CD4-positive, alpha-beta memory T cell (primary cell): ENCODE measurements at regions of chr14 and their contacts with region 1.

Region 1: GRCh38 chr14:95527387-95528002 is 7.4 kb upstream of the GLRX5 start:
- DNase-seq: peak; percentile 43 to 57 (median 52)
- H3K4me3 ChIP-seq: no peak overlapping the region
- H3K4me3 Mint-ChIP-seq: peak overlapping the region in 1 of 8 donors; percentile 52
- H3K27ac ChIP-seq: no peak overlapping the region
- H3K27ac Mint-ChIP-seq: peak overlapping the region; percentile 38 to 90 (median 66)
- H3K4me1 ChIP-seq: peaks cover 65% of the 10 kb centered on the region
- H3K4me1 Mint-ChIP-seq: peaks cover 51 to 80% (median 66%) of the 10 kb centered on the region in 4 donors
- H3K27me3 ChIP-seq: no peaks in the 10 kb centered on the region
- H3K27me3 Mint-ChIP-seq: no peaks in the 10 kb centered on the region

Region 2: DNA sequence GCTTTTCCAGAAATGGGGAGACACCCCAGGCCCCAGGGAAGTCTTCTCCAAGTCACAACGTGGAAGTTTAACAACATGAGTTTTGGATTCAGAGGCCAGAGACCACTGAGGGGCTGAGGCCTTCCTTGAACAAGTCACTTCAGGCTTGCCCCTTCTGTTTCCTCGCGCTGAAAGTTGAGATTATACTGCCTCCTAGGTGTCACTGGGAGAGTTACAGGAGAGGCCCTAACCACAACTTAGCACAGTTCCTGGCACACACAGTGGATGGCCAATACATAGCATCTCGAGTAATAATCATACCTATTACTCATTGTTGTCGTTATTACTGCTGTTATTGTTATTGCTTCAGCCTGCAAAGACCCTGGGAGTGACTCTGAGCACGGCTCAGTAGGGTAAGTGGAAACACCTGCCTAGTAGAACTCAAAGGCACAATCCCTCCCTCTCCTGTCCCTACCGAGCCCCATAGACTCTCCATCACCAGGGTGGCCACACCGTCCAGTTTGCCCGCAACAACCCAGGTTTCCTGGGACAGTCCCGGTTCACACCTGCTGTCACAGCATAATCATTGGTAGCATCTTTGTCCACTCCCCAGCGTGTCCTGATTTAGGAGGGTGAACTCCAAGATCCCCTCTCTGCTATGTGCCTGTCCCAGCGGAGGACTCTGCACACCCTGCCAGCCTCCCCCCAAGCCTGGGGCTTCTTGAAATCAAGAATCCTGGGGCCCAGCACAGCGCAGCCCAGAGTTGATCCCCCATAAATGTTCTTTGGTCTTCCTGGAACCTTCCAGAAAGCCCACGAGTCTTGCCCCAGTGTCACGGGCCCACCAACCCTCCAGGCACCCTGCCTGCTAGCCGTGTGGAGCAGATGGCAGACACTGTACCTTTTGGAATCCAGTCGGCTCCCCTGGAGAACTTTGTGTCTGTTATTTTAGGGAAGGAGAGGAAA is 96.0 kb before region 1 on chr14:
- CTCF ChIA-PET with region 1: interaction called, 47 read pairs
- POLR2A ChIA-PET with region 1: interaction called, 5 read pairs
- intact Hi-C with region 1: loop called (anchors 1 kb)
- DNase-seq: no peak
- H3K4me3 ChIP-seq: no peak overlapping the region
- H3K4me3 Mint-ChIP-seq: no peak overlapping the region
- H3K27ac ChIP-seq: no peak overlapping the region
- H3K27ac Mint-ChIP-seq: peak overlapping the region in 1 of 7 donors; percentile 70
- H3K4me1 ChIP-seq: no peaks in the 10 kb centered on the region
- H3K4me1 Mint-ChIP-seq: peaks cover 0 to 2% (median under 1%) of the 10 kb centered on the region in 4 donors
- H3K27me3 ChIP-seq: no peaks in the 10 kb centered on the region
- H3K27me3 Mint-ChIP-seq: no peaks in the 10 kb centered on the region

Region 3: DNA sequence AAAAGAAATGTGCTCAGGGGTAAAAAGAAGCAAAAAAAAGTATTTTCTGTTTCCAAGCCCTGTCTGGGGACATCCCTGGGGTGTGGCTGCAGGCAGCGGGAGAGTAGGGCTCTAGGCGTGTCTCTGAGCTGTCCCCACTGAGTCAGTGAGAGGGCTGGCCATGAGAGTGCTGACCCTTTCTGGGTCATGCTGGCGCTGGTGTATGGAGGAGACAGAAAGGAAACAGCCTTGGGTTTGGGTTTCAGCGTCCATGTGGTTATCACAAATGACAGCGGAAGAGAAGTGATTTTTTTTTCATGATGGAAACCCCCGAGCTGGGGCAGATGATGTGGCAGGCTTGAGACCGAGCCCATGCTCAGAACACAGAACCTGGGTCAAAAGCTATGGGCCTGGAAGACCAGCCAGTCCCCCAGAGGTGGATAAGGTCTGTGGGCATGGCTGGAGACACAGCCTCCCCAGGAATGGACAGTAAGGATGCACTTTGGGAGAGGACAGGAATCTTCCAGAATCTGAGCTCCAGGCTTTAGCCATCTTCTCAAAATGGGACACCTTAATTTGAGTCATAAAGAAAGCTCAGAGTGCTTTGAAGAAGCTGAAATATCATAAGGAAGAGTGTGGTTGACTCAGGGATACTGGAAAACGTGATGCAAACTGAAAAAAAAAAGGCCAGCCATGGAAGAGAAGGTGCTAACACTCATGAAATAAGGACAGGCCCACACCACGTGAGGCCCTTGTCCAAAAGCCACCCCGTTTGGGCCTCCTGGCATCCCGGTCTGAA is 47.2 kb before region 1 on chr14:
- CTCF ChIA-PET with region 1: interaction called, 30 read pairs
- POLR2A ChIA-PET with region 1: interaction called, 11 read pairs
- intact Hi-C with region 1: no loop called
- DNase-seq: peak; percentile 49 to 85 (median 57)
- H3K4me3 ChIP-seq: no peak overlapping the region
- H3K4me3 Mint-ChIP-seq: peak overlapping the region in 7 of 8 donors; percentile 28 to 74 (median 68)
- H3K27ac ChIP-seq: peak overlapping the region; percentile 61
- H3K27ac Mint-ChIP-seq: peak overlapping the region; percentile 88 to 98 (median 95)
- H3K4me1 ChIP-seq: peaks cover 51% of the 10 kb centered on the region
- H3K4me1 Mint-ChIP-seq: peaks cover 32 to 72% (median 53%) of the 10 kb centered on the region in 4 donors
- H3K27me3 ChIP-seq: no peaks in the 10 kb centered on the region
- H3K27me3 Mint-ChIP-seq: no peaks in the 10 kb centered on the region

Region 4: DNA sequence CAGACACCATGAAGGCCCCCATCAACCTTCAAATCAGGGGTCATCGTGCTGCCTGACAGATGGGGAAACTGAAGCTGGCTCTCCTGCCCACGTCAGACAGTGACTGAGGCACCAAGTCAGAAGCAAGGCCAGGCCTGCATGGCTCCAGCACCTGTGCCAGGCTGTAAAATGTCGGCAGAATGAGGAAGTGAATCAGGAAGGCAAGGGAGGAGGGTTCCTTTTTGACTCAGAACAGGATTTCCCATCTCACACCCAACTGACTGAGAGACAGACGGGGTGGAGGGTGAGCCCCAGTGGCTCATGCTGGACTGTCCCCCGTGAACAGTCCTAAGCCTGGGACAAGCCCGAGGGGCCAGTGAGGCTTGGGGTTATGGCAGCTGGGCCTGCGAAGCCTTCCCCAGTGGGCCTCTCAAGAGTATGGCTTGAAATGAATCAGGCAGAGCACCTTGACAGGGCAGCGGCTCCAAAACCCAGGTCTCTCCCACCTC is 31.9 kb before region 1 on chr14:
- CTCF ChIA-PET with region 1: interaction called, 12 read pairs
- POLR2A ChIA-PET with region 1: interaction called, 10 read pairs
- intact Hi-C with region 1: no loop called
- DNase-seq: peak in 2 of 5 donors; percentile 18 to 52
- H3K4me3 ChIP-seq: no peak overlapping the region
- H3K4me3 Mint-ChIP-seq: peak overlapping the region in 7 of 8 donors; percentile 39 to 73 (median 69)
- H3K27ac ChIP-seq: peak overlapping the region; percentile 50
- H3K27ac Mint-ChIP-seq: peak overlapping the region; percentile 84 to 96 (median 87)
- H3K4me1 ChIP-seq: peaks cover 61% of the 10 kb centered on the region
- H3K4me1 Mint-ChIP-seq: peaks cover 37 to 79% (median 64%) of the 10 kb centered on the region in 4 donors
- H3K27me3 ChIP-seq: no peaks in the 10 kb centered on the region
- H3K27me3 Mint-ChIP-seq: no peaks in the 10 kb centered on the region

Region 5: DNA sequence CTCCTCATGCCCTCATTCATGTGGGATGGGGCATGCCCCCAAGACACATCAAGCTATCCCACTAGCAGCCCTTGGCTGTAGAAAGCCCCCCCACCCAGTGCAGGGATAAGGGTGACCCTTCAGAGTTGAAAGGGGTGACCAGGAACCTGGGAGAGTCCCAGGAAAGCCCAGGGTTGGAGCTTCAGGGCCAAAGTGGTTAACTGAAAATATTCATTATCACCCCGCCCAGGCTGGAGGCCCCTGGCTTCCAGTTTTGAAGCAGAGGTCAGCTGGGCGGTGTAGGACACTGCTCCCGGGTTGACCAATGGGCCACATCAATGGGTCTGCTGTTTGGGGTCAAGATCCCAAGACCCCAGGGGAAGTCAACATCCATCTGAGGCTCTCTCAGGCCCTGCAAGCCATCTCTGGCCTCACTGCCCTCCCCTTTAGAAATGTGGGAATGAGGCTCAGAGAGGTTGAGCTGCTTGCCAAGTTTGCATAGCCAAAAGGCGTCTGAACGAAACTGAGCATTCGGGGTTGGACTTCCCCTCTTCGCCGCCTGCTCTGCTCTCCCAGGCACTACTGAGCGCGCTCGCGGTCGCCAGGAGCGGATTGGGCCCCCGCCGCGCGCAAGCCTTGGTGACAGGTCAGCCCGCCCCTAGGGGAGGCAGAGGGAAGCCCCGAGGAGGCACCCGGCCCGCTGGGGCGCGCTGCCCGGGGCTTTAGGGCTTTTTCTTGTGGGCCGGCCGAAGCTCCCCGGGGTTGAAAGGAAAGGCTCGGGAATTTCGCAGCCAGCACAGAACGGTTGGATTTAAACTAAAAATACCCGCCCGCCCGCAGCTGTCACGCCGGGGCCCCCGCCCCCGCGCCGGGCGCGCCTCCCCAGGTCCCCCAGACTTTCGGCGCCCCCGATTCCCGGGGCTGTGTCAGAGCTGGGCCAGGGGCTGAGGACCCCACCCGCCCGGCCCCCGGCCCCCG is 11.6 kb before region 1 on chr14:
- CTCF ChIA-PET with region 1: interaction called, 77 read pairs
- POLR2A ChIA-PET with region 1: interaction called, 46 read pairs
- intact Hi-C with region 1: loop called (anchors 1 kb)
- DNase-seq: peak; percentile 80 to 93 (median 83)
- H3K4me3 ChIP-seq: peak overlapping the region; percentile 81 to 98
- H3K4me3 Mint-ChIP-seq: peak overlapping the region; percentile 91 to 96 (median 95)
- H3K27ac ChIP-seq: peak overlapping the region; percentile 83
- H3K27ac Mint-ChIP-seq: peak overlapping the region; percentile 95 to 97 (median 96)
- H3K4me1 ChIP-seq: peaks cover 74% of the 10 kb centered on the region
- H3K4me1 Mint-ChIP-seq: peaks cover 55 to 84% (median 71%) of the 10 kb centered on the region in 4 donors
- H3K27me3 ChIP-seq: no peaks in the 10 kb centered on the region
- H3K27me3 Mint-ChIP-seq: no peaks in the 10 kb centered on the region

Region 6: DNA sequence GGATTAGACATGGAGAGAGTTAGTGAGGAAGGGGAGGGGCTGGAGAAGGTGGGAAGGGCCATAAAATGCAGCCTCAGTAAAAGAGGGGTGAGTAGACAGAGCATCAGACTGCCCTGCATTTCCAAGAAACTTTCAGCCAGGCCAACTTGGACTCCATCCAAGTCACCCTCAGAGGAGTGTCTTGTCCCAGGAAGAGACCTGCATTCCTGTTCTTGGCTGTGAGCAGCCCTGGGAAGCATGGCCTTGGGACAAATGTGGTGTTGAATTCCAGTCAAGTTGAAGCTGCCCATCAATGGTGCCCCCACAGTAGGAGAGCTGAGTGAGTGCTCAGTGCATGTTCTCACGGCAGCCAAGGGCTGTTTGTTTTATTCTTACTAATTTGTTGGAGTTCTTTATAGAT is 314.2 kb after region 1 on chr14:
- CTCF ChIA-PET with region 1: no interaction called
- POLR2A ChIA-PET with region 1: no interaction called
- intact Hi-C with region 1: no loop called
- DNase-seq: no peak
- H3K4me3 ChIP-seq: no peak overlapping the region
- H3K4me3 Mint-ChIP-seq: no peak overlapping the region
- H3K27ac ChIP-seq: no peak overlapping the region
- H3K27ac Mint-ChIP-seq: no peak overlapping the region
- H3K4me1 ChIP-seq: no peaks in the 10 kb centered on the region
- H3K4me1 Mint-ChIP-seq: no peaks in the 10 kb centered on the region
- H3K27me3 ChIP-seq: no peaks in the 10 kb centered on the region
- H3K27me3 Mint-ChIP-seq: peaks cover 5 to 14% of the 10 kb centered on the region in 2 donors